ENCODE measurements at regions of chr19 and their contacts with region 1.

Region 1: DNA sequence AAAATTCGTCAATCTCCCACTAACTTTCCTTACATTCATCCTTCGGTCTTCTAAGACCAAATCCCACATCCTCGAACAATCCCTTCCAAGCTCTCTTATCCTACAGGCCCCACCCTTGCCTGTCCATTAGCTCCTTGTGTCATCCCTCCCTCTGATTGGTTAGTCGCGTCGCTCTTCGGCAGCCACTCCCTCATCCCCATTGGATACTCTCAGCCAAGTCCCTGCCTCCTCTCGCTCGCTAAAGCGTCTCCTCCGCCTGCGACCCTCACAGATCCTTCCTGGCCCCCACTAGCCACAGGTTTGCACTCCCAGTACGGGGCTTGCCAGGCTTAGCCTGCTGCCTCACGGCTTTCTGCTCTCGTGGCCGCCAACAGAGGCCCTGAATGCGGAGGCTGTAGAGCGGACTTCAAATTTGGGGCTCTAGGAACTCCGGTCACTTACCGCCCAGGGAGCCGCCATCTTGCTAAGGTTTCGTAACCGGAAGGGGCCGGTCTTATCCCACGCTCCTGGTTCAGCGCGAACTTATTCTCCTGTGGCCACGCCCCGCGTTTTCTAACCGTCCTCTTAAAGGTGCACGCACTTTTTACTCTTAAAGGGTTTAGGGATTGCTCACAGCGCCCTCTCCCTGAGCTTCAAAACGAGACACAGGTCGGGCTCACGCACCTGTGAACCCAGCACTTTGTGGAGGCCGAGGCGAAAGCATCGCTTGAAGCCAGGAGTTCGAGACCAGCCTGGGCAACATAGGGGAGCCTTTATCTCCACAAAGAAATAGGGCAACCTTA is at the start of gene DMAC2:
- DNase-seq: peak; percentile 98
- H3K4me3 ChIP-seq: peak within 1 kb of the TSS; percentile 66 to 91
- H3K27ac ChIP-seq: peak within 1 kb of the TSS; percentile 93 to 98
- H3K4me1 ChIP-seq: no peaks in the 10 kb centered on the region
- H3K27me3 ChIP-seq: no peaks in the 10 kb centered on the region
- CTCF ChIP-seq: peak in 3 of 4 experiments; percentile 45 to 66 (median 62)
- POLR2A ChIP-seq: peak; percentile 60
- total RNA-seq, gene DMAC2: 42.4 to 42.9 TPM

Region 2: DNA sequence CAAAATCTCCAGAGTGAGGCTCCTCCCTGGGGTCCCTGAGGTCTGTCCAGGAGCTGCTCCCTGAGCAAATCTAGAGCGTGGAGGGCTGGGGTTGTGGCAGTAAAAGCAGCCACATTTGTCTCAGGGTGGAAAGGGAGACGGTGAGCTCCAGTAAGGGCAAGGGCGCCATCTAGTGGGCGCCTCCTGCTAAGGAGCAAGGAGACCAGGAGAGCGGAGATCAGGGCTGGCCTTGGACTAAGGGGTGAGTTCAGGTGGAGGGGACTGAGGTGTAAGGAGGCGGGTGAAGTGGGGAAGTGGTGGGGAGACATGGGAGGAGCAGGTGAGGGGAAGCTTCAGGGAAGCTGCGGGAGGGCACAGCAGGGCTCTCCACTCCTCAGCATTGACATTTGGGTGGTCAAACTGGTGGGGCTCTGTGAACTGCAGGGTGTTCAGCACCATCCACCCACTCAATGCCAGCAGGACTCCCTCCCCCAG is 131.0 kb after region 1 on chr19:
- intact Hi-C with region 1: loop called (anchors 10 kb)
- DNase-seq: peak; percentile 70
- H3K4me3 ChIP-seq: no peak overlapping the region
- H3K27ac ChIP-seq: no peak overlapping the region
- H3K4me1 ChIP-seq: no peaks in the 10 kb centered on the region
- H3K27me3 ChIP-seq: peaks cover 5% of the 10 kb centered on the region
- CTCF ChIP-seq: peak; percentile 63 to 78 (median 72)
- POLR2A ChIP-seq: no peak

Region 3: GRCh38 chr19:41785653-41786052 is 346.0 kb after region 1 on chr19:
- intact Hi-C with region 1: no loop called
- DNase-seq: peak; percentile 75
- H3K4me3 ChIP-seq: no peak overlapping the region
- H3K27ac ChIP-seq: no peak overlapping the region
- H3K4me1 ChIP-seq: no peaks in the 10 kb centered on the region
- H3K27me3 ChIP-seq: peaks cover 3% of the 10 kb centered on the region
- CTCF ChIP-seq: peak in 3 of 4 experiments; percentile 80 to 85 (median 84)
- POLR2A ChIP-seq: no peak

Measured in prostate gland (tissue), 2 donors.